Posterior cingulate gyrus (tissue), 11 donors: ENCODE measurements at regions of chr2 and their contacts with region 1.

Region 1: DNA sequence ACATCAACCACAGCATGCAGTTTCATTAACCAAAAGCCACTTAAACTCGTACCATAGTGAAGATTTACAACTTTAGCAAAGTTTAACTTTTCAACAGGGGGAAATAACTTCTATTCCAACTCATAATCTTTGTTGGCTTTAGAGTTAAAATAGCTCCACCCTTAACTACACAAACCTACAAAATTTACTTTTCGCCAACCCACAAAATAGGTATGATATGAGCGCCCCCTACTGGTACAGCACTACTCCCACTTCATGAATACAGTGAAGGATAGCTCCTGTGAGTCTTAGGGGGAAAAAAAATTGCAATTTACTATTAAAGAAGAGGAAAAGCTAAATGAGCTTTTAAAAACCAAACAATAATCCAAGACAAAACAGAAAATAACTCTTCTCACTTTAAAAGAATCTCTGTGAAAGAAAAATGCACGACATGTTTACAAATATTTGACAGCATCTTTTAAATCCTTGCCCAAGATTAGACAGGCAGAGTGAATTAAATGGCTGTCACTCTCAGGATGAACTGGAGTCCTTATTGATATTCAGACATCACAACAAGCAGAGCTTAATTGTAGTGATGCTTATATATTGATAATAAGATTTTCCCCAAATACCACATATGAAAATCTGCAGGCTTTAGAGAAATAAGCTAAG is 32.2 kb downstream of the TMEFF2 start:
- DNase-seq: peak in 7 of 10 donors; percentile 20 to 71 (median 54)

Region 2: GRCh38 chr2:191555092-191555742 is 607.3 kb before region 1 on chr2:
- intact Hi-C with region 1: loop called (anchors 5 kb)
- DNase-seq: peak; percentile 63 to 96 (median 86)

Region 3: GRCh38 chr2:191637182-191638078 is 525.1 kb before region 1 on chr2:
- intact Hi-C with region 1: no loop called
- DNase-seq: no peak

Region 4: DNA sequence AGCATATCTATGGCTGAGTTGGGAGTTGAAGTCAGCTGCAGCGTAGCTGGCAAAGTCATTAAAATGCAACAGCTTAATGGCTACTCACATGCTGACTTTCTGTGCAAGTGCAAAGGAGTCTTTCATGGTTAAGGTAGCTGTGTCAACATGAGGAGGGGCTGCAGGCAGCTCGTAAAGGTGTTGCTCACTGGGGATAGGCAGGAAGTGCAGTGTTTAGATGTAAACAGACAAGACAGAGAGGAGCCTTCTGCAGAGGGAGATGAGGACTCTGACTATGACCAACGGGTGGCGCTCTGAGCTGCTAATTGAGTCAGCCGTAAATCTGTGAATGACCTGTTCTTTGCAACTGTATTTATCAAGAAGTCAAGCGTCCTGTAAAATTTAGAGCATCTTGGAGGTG is 293.3 kb before region 1 on chr2:
- intact Hi-C with region 1: loop called (anchors 1 kb)
- DNase-seq: peak in 7 of 10 donors; percentile 24 to 92 (median 64)